H1 (cell line): ENCODE measurements at regions of chr6 and their contacts with region 1.

Region 1: DNA sequence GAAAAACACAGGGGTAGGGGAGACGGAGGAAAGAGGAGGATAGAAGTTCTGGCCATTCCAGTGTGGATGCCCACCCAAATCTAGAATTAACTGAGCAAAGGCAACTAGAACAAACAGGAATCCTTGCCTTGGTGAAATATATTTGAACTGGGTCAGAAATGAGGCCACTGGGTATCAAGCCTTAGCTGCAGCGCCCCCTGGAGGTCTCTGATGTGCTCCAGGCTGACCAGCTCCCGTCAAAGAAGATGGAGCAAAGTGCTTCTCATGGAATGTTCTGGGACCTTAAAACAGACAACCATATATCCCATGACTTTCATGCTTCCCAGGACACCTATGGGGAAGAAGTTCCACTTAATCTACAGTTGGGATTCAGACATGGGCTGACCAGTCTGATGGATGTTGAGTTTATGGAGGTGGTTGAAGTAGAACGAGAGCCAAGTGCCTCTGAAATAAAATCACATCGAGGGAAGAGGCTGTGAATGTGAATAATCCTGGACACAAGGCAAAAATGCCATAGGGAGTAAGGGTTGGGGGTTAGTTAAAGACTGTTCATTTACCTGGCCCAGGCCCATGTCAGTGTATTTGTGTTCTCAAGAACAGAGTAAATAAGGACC is 50.4 kb downstream of the HLA-DPB1 start:
- DNase-seq: peak in 1 of 2 experiments; percentile 91
- H3K4me3 ChIP-seq: no peak overlapping the region
- H3K27ac ChIP-seq: no peak overlapping the region
- H3K4me1 ChIP-seq: peaks cover 0 to under 1% (median 0%) of the 10 kb centered on the region in 4 experiments; a peak in 2 of 7 replicates
- H3K27me3 ChIP-seq: no peaks in the 10 kb centered on the region
- CTCF ChIP-seq: peak; percentile 72 to 85 (median 80)
- EP300 ChIP-seq: no peak
- POLR2A ChIP-seq: no peak
- RAD21 ChIP-seq: peak; percentile 45 to 56; a peak in 3 of 4 replicates

Region 2: DNA sequence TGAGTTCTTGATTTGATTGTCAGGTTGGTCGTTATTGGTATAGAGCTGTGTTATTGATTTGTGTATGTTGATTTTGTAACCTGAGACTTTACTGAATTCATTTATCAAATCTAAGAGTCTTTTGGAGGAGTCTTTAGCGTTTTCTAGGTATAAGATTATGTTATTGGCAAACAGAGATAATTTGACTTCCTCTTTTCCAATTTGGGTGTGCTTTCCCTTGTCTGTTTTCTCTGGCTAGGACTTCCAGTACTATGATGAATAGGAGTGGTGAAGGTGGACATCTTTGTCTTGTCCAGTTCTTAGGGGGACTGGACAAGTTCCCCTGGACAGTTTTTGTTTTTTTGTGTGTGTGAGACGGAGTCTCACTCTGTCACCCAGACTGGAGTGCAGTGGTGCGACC is 134.2 kb before region 1 on chr6:
- CTCF ChIA-PET with region 1: no interaction called
- POLR2A ChIA-PET with region 1: no interaction called
- DNase-seq: no peak
- H3K4me3 ChIP-seq: no peak overlapping the region
- H3K27ac ChIP-seq: no peak overlapping the region
- H3K4me1 ChIP-seq: peaks cover 0 to 6% (median 2%) of the 10 kb centered on the region in 4 experiments; a peak in 4 of 7 replicates
- H3K27me3 ChIP-seq: no peaks in the 10 kb centered on the region; a peak in 1 of 7 replicates
- CTCF ChIP-seq: no peak
- EP300 ChIP-seq: no peak
- POLR2A ChIP-seq: no peak
- RAD21 ChIP-seq: no peak

Region 3: GRCh38 chr6:33139596-33140206 is 13.5 kb after region 1 on chr6:
- CTCF ChIA-PET with region 1: interaction called, 63 read pairs
- POLR2A ChIA-PET with region 1: interaction called, 23 read pairs
- DNase-seq: no peak
- H3K4me3 ChIP-seq: no peak overlapping the region
- H3K27ac ChIP-seq: no peak overlapping the region
- H3K4me1 ChIP-seq: no peaks in the 10 kb centered on the region
- H3K27me3 ChIP-seq: no peaks in the 10 kb centered on the region
- CTCF ChIP-seq: no peak
- EP300 ChIP-seq: no peak
- POLR2A ChIP-seq: no peak
- RAD21 ChIP-seq: no peak

Region 4: DNA sequence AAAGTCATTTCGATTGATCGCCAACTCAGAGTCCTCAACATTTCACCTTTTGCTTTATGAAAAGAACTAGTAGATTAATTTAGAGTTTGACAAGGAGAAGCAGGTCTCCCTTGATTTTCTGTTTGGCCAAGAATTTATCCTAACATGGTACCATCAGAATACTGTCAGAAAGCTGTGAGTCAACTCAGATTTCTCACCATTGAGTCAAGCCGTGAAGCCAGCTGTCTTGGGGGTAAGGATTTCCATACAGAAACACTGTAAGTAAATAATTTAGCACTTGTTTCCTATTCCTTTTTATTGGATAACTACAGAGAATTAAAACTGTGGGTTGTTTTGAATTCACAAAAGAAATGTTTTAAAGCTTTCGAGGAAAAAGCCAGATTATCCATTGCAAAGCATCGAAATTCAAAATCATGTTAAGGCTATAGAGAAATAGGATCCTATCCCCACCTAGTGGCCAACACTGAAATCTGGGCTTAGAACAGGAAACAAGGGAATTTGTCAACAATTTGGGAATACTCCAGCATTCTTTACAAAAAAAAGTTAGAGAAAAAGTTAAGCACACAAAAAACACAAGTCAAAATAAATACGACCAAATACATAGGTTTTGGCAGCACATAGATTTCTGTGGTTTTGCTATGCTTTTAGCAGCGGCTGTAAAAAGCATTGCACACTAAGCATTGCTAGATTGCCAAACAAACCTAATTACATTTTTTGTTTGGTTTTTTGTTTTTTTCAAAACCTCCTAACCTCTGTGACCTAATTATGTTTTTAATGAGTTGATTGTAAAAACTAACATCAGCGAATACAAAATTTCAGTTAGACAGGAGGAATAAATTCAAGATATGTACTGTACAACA is 21.8 kb after region 1 on chr6:
- CTCF ChIA-PET with region 1: interaction called, 55 read pairs
- POLR2A ChIA-PET with region 1: interaction called, 12 read pairs
- DNase-seq: no peak
- H3K4me3 ChIP-seq: no peak overlapping the region
- H3K27ac ChIP-seq: no peak overlapping the region
- H3K4me1 ChIP-seq: peaks cover 0 to 2% (median 0%) of the 10 kb centered on the region in 4 experiments; a peak in 1 of 7 replicates
- H3K27me3 ChIP-seq: no peaks in the 10 kb centered on the region
- CTCF ChIP-seq: peak in 2 of 3 experiments; percentile 61 to 72; a peak in 3 of 4 replicates
- EP300 ChIP-seq: no peak
- POLR2A ChIP-seq: no peak
- RAD21 ChIP-seq: peak; percentile 75 to 80

Region 5: GRCh38 chr6:33156561-33156960 is 30.4 kb after region 1 on chr6:
- CTCF ChIA-PET with region 1: interaction called, 18 read pairs
- POLR2A ChIA-PET with region 1: interaction called, 5 read pairs
- DNase-seq: no peak
- H3K4me3 ChIP-seq: no peak overlapping the region
- H3K27ac ChIP-seq: no peak overlapping the region
- H3K4me1 ChIP-seq: peaks cover 0 to 3% (median 0%) of the 10 kb centered on the region in 4 experiments; a peak in 2 of 7 replicates
- H3K27me3 ChIP-seq: no peaks in the 10 kb centered on the region
- CTCF ChIP-seq: no peak
- EP300 ChIP-seq: no peak
- POLR2A ChIP-seq: no peak
- RAD21 ChIP-seq: no peak

Region 6: DNA sequence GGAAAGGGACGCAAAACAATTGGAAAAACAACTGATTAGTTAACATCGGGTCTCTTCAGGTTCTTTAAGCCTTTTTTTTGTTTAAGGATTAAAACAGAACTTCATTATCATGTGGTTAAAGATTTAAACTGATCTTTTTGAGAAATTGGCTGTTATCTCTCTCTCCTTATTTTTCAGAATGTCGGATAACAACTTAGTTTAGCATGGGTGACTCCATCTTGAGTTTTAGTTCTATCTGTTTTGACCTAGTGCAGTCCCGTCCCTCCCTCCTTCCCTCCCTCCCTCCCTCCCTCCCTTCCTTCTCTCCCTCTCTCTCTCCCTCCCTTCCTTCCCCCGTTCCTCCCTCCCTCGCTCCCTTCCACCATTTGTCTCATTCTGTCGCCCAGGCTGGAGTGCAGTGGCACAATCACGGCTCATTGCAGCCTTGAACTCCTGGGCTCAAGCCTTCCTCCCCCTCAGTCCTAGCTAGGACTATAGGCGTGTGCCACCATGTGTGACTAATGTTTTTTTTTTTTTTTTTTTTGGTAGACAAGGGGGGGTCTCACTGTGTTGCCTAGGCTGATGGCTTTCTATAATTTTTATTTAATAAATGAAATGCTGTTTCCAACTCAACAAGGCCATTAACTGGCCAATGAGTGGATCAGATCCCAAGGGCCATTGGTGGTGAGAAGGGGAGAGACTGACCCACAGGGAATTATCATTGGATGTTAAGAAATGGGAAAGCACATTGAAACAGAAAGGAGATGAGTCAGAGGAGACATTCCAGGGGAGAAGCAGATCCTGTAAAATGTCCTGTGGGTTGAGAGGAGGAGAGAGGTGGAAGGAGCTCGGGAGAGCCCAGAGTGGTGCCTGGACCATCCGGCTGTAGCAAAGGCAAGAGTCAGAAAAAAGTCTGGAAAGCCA is 440.2 kb after region 1 on chr6:
- CTCF ChIA-PET with region 1: no interaction called
- POLR2A ChIA-PET with region 1: no interaction called
- DNase-seq: no peak
- H3K4me3 ChIP-seq: no peak overlapping the region
- H3K27ac ChIP-seq: no peak overlapping the region
- H3K4me1 ChIP-seq: peaks cover 0 to under 1% (median under 1%) of the 10 kb centered on the region in 4 experiments; a peak in 3 of 7 replicates
- H3K27me3 ChIP-seq: no peaks in the 10 kb centered on the region
- CTCF ChIP-seq: no peak
- EP300 ChIP-seq: no peak
- POLR2A ChIP-seq: no peak
- RAD21 ChIP-seq: no peak